Calu3 (cell line): ENCODE measurements at regions of chr3 and their contacts with region 1.

Region 1: DNA sequence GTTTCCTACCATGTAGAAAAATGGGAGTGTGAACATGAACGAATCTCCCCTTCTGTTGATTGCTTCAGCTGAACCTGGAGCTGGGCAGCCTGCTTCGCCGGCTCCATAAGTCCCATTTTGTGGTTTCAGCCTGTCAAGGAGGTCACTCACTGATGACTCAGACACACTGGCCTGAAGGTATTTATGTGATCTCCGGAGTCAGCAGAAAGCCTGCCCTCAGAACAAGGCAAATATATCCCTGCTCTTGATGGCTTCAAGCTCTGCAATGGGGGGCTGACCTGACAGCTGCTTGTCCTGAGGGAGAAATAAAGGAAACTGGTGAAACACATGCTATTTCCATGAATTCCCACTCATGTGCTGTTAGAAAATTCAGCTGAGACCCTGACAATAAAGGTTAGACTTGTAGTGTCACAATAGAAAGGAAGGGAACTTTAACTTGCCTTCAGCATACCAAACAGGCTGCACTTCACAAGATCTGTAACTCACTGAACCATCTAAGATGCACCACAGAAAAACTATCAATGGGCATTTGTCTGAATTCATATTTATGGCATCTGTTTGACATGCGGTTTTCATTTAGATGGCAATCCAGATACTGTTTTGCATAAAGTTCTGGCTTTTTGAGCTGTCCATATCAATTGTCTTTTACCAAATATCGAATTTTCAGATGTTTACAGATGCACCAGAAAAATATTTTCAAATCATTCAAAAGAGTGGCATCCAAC is 282.0 kb upstream of the VEPH1 start:
- DNase-seq: peak; percentile 78
- H3K4me3 Mint-ChIP-seq: no peak overlapping the region
- H3K27ac Mint-ChIP-seq: no peak overlapping the region
- H3K4me1 Mint-ChIP-seq: peaks cover 31% of the 10 kb centered on the region
- H3K27me3 Mint-ChIP-seq: no peaks in the 10 kb centered on the region
- CTCF ChIP-seq: no peak

Region 2: GRCh38 chr3:158103081-158103886 is 318.0 kb after region 1 on chr3:
- CTCF ChIA-PET with region 1: no interaction called
- intact Hi-C with region 1: loop called (anchors 5 kb)
- DNase-seq: peak; percentile 39
- H3K4me3 Mint-ChIP-seq: peak overlapping the region; percentile 81
- H3K27ac Mint-ChIP-seq: peak overlapping the region; percentile 26
- H3K4me1 Mint-ChIP-seq: peaks cover 32% of the 10 kb centered on the region
- H3K27me3 Mint-ChIP-seq: peaks cover 21% of the 10 kb centered on the region
- CTCF ChIP-seq: no peak